ENCODE measurements at regions of chr17 and their contacts with region 1.

Region 1: DNA sequence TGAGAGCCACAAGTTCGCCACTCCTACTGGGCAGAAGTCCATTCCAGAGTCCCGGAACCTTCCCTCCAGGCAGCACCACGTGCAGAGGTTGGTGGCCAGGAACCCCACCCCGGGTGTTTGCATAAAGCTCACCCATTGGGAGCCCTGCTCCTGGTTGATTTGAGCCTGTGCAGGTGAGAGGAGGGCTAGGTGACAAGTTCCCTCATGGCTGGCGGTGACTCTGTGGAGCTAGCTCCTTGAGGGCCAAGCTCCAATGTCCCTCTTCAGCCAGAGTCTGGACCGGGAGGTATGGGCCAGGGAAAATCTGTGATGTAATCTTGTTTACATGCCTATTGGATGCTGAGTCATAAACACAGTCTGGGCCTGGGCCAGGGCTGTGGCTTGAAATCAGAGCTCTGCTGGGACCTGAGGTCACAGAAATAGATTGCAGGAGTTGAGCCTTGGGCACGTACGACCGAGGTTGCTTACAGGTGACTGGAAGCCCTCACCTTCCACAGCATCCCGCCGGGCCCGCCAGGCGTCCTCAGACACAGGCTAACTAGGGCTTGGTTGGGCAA is 118.9 kb downstream of the AATF start:
- DNase-seq: peak; percentile 26
- H3K4me3 ChIP-seq: no peak overlapping the region
- H3K27me3 ChIP-seq: peaks cover 2% of the 10 kb centered on the region
- CTCF ChIP-seq: no peak

Region 2: GRCh38 chr17:36731811-36732210 is 335.8 kb before region 1 on chr17:
- CTCF ChIA-PET with region 1: no interaction called
- POLR2A ChIA-PET with region 1: interaction called, 12 read pairs
- DNase-seq: no peak
- H3K4me3 ChIP-seq: no peak overlapping the region
- H3K27me3 ChIP-seq: peaks cover 24% of the 10 kb centered on the region
- CTCF ChIP-seq: no peak

Region 3: DNA sequence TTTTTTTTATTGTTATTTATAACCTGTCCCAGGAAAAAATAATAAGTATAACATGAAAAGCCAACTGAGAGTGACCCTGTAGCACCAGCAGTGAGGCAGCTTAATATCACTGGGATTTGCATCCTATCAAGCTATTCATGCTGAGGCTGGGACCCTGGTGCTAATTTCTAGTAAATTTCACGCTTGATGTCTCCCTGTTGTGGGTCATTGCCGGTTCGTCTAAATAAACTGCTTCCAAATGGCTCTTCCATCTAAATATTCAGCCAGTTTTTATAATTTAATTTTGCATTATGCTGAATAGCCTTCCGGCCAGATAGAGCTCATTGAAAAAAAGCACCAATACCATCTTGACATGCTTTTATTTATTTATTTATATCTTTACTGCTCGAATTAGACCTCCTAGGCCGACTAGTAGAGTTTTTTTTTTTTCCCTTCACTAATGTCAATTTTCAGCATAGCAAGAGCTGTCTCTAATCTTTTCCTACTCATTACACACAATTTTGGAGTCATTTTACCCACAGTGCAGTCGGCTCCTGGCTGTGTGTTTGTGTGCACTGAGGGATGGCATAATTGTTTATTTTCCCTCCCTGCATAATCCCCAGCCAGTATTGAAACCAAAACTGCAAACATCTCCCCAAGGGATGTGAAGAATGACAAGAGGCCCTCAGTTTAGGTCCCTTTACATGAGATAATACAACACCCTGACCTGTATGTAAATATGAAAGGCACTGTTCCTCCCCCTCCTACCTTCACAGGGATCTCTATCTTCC is 49.9 kb after region 1 on chr17:
- CTCF ChIA-PET with region 1: no interaction called
- POLR2A ChIA-PET with region 1: no interaction called
- DNase-seq: no peak
- H3K4me3 ChIP-seq: no peak overlapping the region
- H3K27me3 ChIP-seq: no peaks in the 10 kb centered on the region
- CTCF ChIP-seq: no peak

Measured in BJ (cell line).